A673 (cell line): ENCODE measurements at regions of chr11 and their contacts with region 1.

Region 1: DNA sequence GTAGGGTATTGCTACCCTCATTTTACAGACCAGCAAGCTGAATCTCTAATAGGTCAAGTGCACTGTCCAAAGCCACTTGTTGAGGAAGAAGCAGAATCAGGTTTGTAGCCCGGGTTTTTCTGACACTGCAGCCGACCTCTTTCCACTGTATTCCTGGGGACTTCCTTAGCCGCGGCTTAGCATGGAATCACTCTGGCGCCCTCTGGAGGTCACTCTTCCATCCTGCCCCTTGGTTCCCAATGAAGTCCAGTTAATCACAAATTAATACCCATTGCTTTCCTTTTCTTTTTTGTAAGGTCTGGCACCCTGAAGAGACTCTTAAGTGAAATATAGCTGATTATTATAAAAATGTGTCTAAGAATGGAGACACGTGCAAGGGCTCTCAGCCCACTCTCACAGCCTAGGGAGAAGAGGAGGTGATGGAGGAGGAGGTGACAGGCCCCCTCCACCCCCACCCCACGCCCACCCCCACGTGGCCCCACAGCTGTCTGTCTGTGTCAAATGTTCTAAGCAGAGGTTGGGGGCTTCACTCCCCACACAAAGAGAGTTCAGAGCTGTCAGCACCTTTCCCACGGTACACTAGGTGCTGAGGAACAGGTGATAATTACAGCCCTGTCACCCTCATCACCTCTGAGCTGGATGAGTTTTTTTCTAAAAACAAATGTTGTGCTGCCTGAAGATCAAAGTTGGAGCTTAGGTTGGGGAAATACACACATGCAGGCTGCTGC is 57.7 kb upstream of the DRD2 start:
- DNase-seq: peak; percentile 83
- H3K4me3 ChIP-seq: no peak overlapping the region
- H3K27ac ChIP-seq: no peak overlapping the region
- H3K4me1 ChIP-seq: no peaks in the 10 kb centered on the region
- H3K27me3 ChIP-seq: no peaks in the 10 kb centered on the region
- CTCF ChIP-seq: peak; percentile 97

Region 2: DNA sequence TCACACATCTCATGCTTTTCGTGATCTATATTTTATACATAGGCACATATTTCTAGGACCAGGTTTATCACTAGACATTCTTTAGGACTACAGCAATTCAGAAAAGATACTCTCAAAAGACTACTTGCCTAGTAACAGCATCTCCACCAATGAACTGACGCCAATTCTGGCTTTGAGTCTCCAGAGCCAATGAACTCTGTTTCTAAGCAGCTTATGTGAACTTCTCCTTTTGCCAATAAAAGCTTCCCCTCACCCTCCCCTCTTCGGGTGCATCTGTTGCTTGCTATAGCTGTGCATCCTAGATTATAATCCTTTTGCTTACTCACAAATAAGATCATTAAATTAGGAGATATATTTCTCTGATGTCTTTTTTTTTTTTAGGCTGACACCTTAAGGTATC is 156.7 kb before region 1 on chr11:
- CTCF ChIA-PET with region 1: no interaction called
- POLR2A ChIA-PET with region 1: no interaction called
- intact Hi-C with region 1: loop called (anchors 5 kb)
- DNase-seq: no peak
- H3K4me3 ChIP-seq: no peak overlapping the region
- H3K27ac ChIP-seq: no peak overlapping the region
- H3K4me1 ChIP-seq: no peaks in the 10 kb centered on the region
- H3K27me3 ChIP-seq: no peaks in the 10 kb centered on the region
- CTCF ChIP-seq: no peak

Region 3: DNA sequence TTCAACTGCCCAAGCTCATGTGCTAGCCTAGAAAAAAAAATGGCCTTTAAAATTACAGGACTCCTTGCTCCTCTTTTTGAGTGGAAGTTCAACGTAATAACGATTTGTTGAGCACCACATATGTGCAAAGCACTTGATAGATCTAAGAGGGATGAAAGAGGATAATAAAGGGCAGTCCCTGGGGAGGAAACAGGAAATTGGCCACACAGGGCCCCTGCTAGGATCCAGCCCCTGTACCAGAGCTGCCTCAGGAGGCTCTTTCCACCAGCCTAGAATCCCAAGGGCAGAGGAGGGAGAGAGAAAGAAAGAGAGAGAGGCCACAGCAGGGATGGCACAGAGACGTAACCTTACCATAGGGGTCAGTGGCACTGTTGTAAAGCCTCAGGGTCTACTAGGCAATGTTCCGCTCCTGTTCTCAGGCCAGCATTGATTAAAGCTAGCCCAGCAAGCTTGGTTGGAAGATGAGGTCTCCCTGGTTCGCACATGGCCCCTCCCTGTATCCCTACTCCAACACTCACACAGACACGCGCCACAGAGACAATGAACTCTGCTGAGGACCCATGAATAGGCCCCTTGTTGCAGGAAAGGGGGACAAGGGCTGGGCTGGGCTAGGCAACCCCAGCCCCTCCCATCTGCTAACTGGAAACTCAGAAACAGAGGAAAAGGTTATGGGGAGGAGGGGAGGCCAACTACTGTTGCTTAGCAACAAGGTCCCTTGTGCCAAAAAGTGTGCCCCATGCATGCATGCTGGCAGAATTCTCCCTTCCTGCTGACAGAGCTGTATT is 173.2 kb after region 1 on chr11 and contains the start of gene TMPRSS5:
- CTCF ChIA-PET with region 1: no interaction called
- POLR2A ChIA-PET with region 1: no interaction called
- intact Hi-C with region 1: no loop called
- DNase-seq: peak; percentile 93
- H3K4me3 ChIP-seq: no peak within 1 kb of the TSS
- H3K27ac ChIP-seq: peak within 1 kb of the TSS; percentile 1
- H3K4me1 ChIP-seq: peaks cover 18% of the 10 kb centered on the region
- H3K27me3 ChIP-seq: no peaks in the 10 kb centered on the region
- CTCF ChIP-seq: no peak
- total RNA-seq, gene TMPRSS5: 1.5 and 2.9 TPM in 2 replicates